Activated CD8-positive, alpha-beta T cell treated with anti-CD3 and anti-CD28 coated beads, Interleukin-2, amount 10 ng/mL, durations not matched to agents 7 days and 5 days (primary cell): ENCODE measurements at regions of chr7 and their contacts with region 1.

Region 1: DNA sequence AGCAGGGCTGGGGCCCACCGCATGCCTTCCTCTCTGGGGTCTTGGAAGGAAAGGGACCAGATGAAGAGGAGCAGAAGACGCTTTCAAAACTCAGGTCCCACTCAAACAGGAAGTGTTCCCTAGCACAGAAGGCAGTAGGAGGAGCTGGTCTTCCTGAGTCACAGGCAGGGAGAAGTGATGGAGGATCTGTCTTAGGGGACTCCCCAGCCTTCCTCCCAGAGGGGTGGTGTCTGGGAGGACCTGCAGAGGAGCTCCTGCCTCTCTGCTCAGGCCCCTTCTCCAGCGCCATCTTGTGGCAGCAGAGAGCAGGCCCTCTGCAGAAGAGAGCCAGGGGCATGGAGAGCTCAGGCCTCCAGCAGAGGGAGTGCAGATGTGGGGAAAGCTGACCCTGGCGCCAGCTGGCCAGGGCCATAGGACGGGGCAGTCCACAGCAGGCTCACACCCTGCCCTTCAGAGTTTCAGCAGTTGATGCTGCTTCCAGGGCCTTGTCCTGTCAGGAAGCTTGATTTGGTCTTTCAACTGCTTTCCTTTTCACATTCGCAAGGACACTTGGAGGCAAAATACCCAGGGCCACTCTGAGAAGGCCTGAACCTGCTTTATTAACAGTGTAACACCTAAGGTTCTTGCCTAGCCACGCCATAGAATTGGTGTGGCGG is 62.2 kb upstream of the TARP start:
- DNase-seq: peak; percentile 90
- ATAC-seq: peak; percentile 89
- H3K4me3 Mint-ChIP-seq: peak overlapping the region; percentile 84
- H3K27ac Mint-ChIP-seq: peak overlapping the region; percentile 83
- H3K4me1 Mint-ChIP-seq: peaks cover 58% of the 10 kb centered on the region
- H3K27me3 Mint-ChIP-seq: no peaks in the 10 kb centered on the region

Region 2: DNA sequence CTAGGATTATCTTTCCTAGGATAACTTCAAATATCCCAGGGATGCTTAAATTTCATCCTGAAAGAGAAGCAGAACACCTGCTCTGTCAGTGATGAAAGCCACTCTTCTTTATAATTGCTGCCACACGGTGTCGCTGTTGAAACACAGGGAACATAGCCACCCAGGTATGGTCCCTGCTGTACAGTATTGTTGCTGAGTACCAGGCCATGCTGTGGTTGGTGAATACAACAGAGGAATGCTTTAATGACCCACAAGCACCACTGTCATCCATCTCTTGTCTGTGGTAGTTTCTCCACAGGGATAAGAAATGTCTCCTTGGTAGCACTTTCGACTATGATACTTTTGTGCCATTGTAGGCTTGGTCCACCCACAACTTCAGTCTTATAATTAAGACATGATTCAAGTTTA is 228.1 kb before region 1 on chr7:
- CTCF ChIA-PET with region 1: interaction called, 41 read pairs
- POLR2A ChIA-PET with region 1: no interaction called
- DNase-seq: peak; percentile 78
- ATAC-seq: peak; percentile 88
- H3K4me3 Mint-ChIP-seq: no peak overlapping the region
- H3K27ac Mint-ChIP-seq: no peak overlapping the region
- H3K4me1 Mint-ChIP-seq: no peaks in the 10 kb centered on the region
- H3K27me3 Mint-ChIP-seq: peaks cover 27% of the 10 kb centered on the region

Region 3: GRCh38 chr7:38232502-38233366 is 102.9 kb before region 1 on chr7:
- CTCF ChIA-PET with region 1: interaction called, 52 read pairs
- POLR2A ChIA-PET with region 1: no interaction called
- DNase-seq: peak; percentile 90
- ATAC-seq: peak; percentile 89
- H3K4me3 Mint-ChIP-seq: peak overlapping the region; percentile 62
- H3K27ac Mint-ChIP-seq: peak overlapping the region; percentile 95
- H3K4me1 Mint-ChIP-seq: peaks cover 94% of the 10 kb centered on the region
- H3K27me3 Mint-ChIP-seq: no peaks in the 10 kb centered on the region

Region 4: DNA sequence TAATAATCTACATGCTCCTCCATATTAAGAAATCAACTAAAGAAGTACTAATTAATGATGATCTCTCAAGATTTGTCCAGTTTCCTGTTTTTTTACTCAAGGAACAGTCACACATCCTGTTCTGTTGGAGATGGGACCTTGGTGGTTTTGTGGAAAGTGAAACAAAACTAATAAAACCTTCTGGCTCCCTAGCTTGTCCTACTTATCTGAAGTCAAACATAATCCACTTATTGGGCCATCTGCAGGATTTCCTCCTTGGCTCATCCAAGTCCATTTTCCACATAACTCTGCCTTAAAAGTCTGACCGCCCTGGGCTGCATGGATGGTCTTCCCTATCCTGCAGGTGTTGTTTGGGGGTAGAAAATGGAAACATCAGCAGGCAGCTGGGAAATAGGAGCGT is 22.8 kb before region 1 on chr7:
- CTCF ChIA-PET with region 1: interaction called, 87 read pairs
- POLR2A ChIA-PET with region 1: no interaction called
- DNase-seq: no peak
- ATAC-seq: no peak
- H3K4me3 Mint-ChIP-seq: peak overlapping the region; percentile 53
- H3K27ac Mint-ChIP-seq: peak overlapping the region; percentile 63
- H3K4me1 Mint-ChIP-seq: peaks cover 56% of the 10 kb centered on the region
- H3K27me3 Mint-ChIP-seq: no peaks in the 10 kb centered on the region

Region 5: DNA sequence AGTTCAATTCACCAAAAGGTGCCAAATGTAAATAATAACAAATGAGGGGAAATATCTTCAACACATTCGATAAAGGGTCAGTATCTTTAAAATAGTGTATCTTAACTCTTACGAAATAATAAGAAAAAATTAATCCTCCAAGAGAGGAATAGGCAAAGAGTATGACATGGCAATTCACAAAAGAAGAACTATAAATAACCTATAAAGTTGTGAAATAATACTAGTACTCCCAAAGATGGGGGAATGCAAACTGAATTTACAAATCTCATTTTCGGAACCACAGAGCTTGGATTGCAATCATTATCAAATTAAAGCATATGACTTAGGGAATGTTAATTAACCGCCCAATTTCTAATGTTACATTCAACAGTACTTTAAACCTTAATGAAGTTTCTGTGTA is 16.0 kb after region 1 on chr7:
- CTCF ChIA-PET with region 1: interaction called, 42 read pairs
- POLR2A ChIA-PET with region 1: no interaction called
- DNase-seq: no peak
- ATAC-seq: no peak
- H3K4me3 Mint-ChIP-seq: peak overlapping the region; percentile 87
- H3K27ac Mint-ChIP-seq: peak overlapping the region; percentile 92
- H3K4me1 Mint-ChIP-seq: peaks cover 50% of the 10 kb centered on the region
- H3K27me3 Mint-ChIP-seq: no peaks in the 10 kb centered on the region